ENCODE measurements at regions of chr1 and their contacts with region 1.

Region 1: GRCh38 chr1:92485381-92486257 is 1.1 kb downstream of the GFI1 start:
- DNase-seq: peak; percentile 71 to 86 (median 76)
- ATAC-seq: peak; percentile 70 to 72
- H3K4me3 Mint-ChIP-seq: peak overlapping the region; percentile 86 to 97 (median 93)
- H3K27ac Mint-ChIP-seq: peak overlapping the region; percentile 87 to 93 (median 91)
- H3K4me1 Mint-ChIP-seq: peaks cover 12 to 40% (median 31%) of the 10 kb centered on the region in 4 donors
- H3K27me3 Mint-ChIP-seq: no peaks in the 10 kb centered on the region

Region 2: GRCh38 chr1:92317836-92318493 is 167.7 kb before region 1 on chr1:
- POLR2A ChIA-PET with region 1: interaction called, 34 read pairs
- DNase-seq: peak in 5 of 10 donors; percentile 36 to 53 (median 47)
- ATAC-seq: peak; percentile 52 to 61
- H3K4me3 Mint-ChIP-seq: peak overlapping the region; percentile 17 to 74 (median 64)
- H3K27ac Mint-ChIP-seq: peak overlapping the region; percentile 58 to 91 (median 84)
- H3K4me1 Mint-ChIP-seq: peaks cover 30 to 62% (median 55%) of the 10 kb centered on the region in 4 donors
- H3K27me3 Mint-ChIP-seq: no peaks in the 10 kb centered on the region

Region 3: GRCh38 chr1:92536980-92537884 is 51.6 kb after region 1 on chr1:
- POLR2A ChIA-PET with region 1: interaction called, 39 read pairs
- DNase-seq: peak in 8 of 10 donors; percentile 16 to 83 (median 56)
- ATAC-seq: peak; percentile 88 to 93
- H3K4me3 Mint-ChIP-seq: peak overlapping the region; percentile 42 to 83 (median 75)
- H3K27ac Mint-ChIP-seq: peak overlapping the region; percentile 12 to 94 (median 80)
- H3K4me1 Mint-ChIP-seq: peaks cover 18 to 71% (median 50%) of the 10 kb centered on the region in 4 donors
- H3K27me3 Mint-ChIP-seq: no peaks in the 10 kb centered on the region

Region 4: GRCh38 chr1:92583821-92584760 is 98.5 kb after region 1 on chr1:
- POLR2A ChIA-PET with region 1: interaction called, 13 read pairs
- DNase-seq: peak in 4 of 10 donors; percentile 22 to 80 (median 70)
- ATAC-seq: peak; percentile 96 to 99
- H3K4me3 Mint-ChIP-seq: peak overlapping the region; percentile 3 to 78 (median 68)
- H3K27ac Mint-ChIP-seq: peak overlapping the region; percentile 5 to 93 (median 72)
- H3K4me1 Mint-ChIP-seq: peaks cover 11 to 49% (median 36%) of the 10 kb centered on the region in 4 donors
- H3K27me3 Mint-ChIP-seq: no peaks in the 10 kb centered on the region

Measured in naive thymus-derived CD8-positive, alpha-beta T cell (primary cell).